ENCODE measurements at regions of chrX and their contacts with region 1.

Region 1: GRCh38 chrX:101051549-101052302 is at the start of gene TRMT2B:
- DNase-seq: peak; percentile 90
- ATAC-seq: peak; percentile 88
- H3K4me3 Mint-ChIP-seq: peak within 1 kb of the TSS; percentile 83
- H3K27ac Mint-ChIP-seq: peak within 1 kb of the TSS; percentile 94
- H3K4me1 Mint-ChIP-seq: peaks cover 29% of the 10 kb centered on the region
- H3K27me3 Mint-ChIP-seq: no peaks in the 10 kb centered on the region
- total RNA-seq, gene TRMT2B: 20.6 to 24.3 TPM

Region 2: GRCh38 chrX:100928660-100929613 is 122.8 kb before region 1 on chrX and contains the start of gene XKRX:
- CTCF ChIA-PET with region 1: interaction called, 4 read pairs
- POLR2A ChIA-PET with region 1: no interaction called
- intact Hi-C with region 1: loop called (anchors 2 to 5 kb)
- DNase-seq: peak; percentile 74
- ATAC-seq: peak; percentile 78
- H3K4me3 Mint-ChIP-seq: peak within 1 kb of the TSS; percentile 79
- H3K27ac Mint-ChIP-seq: peak within 1 kb of the TSS; percentile 75
- H3K4me1 Mint-ChIP-seq: peaks cover 53% of the 10 kb centered on the region
- H3K27me3 Mint-ChIP-seq: no peaks in the 10 kb centered on the region
- total RNA-seq, gene XKRX: 0.78 to 1.0 TPM

Region 3: GRCh38 chrX:101097546-101098453 is 46.1 kb after region 1 on chrX and contains the start of gene CENPI:
- CTCF ChIA-PET with region 1: no interaction called
- POLR2A ChIA-PET with region 1: no interaction called
- intact Hi-C with region 1: loop called (anchors 1 to 2 kb)
- DNase-seq: peak; percentile 95
- ATAC-seq: peak; percentile 99
- H3K4me3 Mint-ChIP-seq: peak within 1 kb of the TSS; percentile 79
- H3K27ac Mint-ChIP-seq: peak within 1 kb of the TSS; percentile 85
- H3K4me1 Mint-ChIP-seq: peaks cover 19% of the 10 kb centered on the region
- H3K27me3 Mint-ChIP-seq: no peaks in the 10 kb centered on the region
- total RNA-seq, gene CENPI: 19.6 to 20.6 TPM

Region 4: GRCh38 chrX:101348452-101349192 is 296.9 kb after region 1 on chrX and contains the start of gene TIMM8A:
- CTCF ChIA-PET with region 1: no interaction called
- POLR2A ChIA-PET with region 1: no interaction called
- intact Hi-C with region 1: loop called in 1 of 2 experiments (anchors 2 kb)
- DNase-seq: peak; percentile 88
- ATAC-seq: peak; percentile 98
- H3K4me3 Mint-ChIP-seq: peak within 1 kb of the TSS; percentile 85
- H3K27ac Mint-ChIP-seq: peak within 1 kb of the TSS; percentile 93
- H3K4me1 Mint-ChIP-seq: peaks cover 9% of the 10 kb centered on the region
- H3K27me3 Mint-ChIP-seq: no peaks in the 10 kb centered on the region
- total RNA-seq, gene TIMM8A: 12.8 to 23.8 TPM

Region 5: GRCh38 chrX:101407748-101408531 is 356.2 kb after region 1 on chrX and contains the starts of genes GLA and HNRNPH2:
- CTCF ChIA-PET with region 1: no interaction called
- POLR2A ChIA-PET with region 1: no interaction called
- intact Hi-C with region 1: loop called in 1 of 2 experiments (anchors 5 kb)
- DNase-seq: peak; percentile 91
- ATAC-seq: peak; percentile 94
- H3K4me3 Mint-ChIP-seq: peak within 1 kb of the TSS; percentile 97
- H3K27ac Mint-ChIP-seq: peak within 1 kb of the TSS; percentile 97
- H3K4me1 Mint-ChIP-seq: peaks cover 26% of the 10 kb centered on the region
- H3K27me3 Mint-ChIP-seq: no peaks in the 10 kb centered on the region
- total RNA-seq, gene GLA: 32.6 to 42.2 TPM
- total RNA-seq, gene HNRNPH2: 18.6 to 26.9 TPM